Colonic mucosa (tissue), 4 donors: ENCODE measurements at regions of chr7 and their contacts with region 1.

Region 1: GRCh38 chr7:92944633-92945032 is 108.3 kb upstream of the CDK6 start:
- DNase-seq: peak; percentile 60
- H3K4me3 ChIP-seq: no peak overlapping the region
- H3K27ac ChIP-seq: no peak overlapping the region
- H3K4me1 ChIP-seq: no peaks in the 10 kb centered on the region
- H3K27me3 ChIP-seq: no peaks in the 10 kb centered on the region
- CTCF ChIP-seq: no peak

Region 2: DNA sequence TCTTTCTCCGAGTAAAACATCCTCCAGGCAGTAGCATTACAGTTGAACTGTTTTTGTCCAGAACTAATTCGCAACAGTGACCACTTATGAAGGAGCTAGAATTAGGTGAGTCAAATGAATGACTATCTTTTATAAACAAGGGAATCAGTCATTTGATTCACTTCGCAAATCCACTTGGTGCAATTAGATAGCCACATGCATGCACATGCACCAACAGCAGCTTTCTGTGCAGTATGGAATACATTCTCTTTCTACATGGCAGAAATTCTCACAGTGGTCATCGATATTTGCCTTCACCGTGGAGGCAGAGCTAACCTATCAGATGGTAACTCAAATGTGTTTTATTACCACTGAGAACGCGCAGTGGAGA is 227.0 kb before region 1 on chr7:
- intact Hi-C with region 1: no loop called
- DNase-seq: no peak
- H3K4me3 ChIP-seq: peak overlapping the region; percentile 36
- H3K27ac ChIP-seq: peak overlapping the region; percentile 74
- H3K4me1 ChIP-seq: peaks cover 4% of the 10 kb centered on the region
- H3K27me3 ChIP-seq: no peaks in the 10 kb centered on the region
- CTCF ChIP-seq: no peak

Region 3: DNA sequence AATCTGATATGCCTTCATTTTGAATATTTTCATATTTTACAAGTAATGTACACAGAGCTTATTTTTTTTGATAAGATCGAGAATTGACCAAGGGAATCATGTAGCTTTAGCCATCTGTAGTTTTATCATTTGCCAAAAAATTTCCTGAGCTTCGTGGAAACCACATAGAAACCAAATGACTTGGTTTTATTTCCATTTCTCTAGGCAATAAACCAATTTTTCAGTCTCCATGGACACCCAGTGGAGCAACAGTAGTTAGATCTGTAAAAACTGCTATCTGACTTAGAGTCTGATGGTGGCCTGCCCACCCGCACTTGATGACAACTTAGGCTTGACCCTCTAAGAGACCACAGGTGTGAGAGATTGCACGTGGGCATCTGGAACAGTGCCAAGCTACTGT is 19.5 kb after region 1 on chr7:
- intact Hi-C with region 1: no loop called
- DNase-seq: no peak
- H3K4me3 ChIP-seq: no peak overlapping the region
- H3K27ac ChIP-seq: no peak overlapping the region
- H3K4me1 ChIP-seq: no peaks in the 10 kb centered on the region
- H3K27me3 ChIP-seq: no peaks in the 10 kb centered on the region
- CTCF ChIP-seq: no peak

Region 4: GRCh38 chr7:93015779-93016481 is 71.3 kb after region 1 on chr7:
- intact Hi-C with region 1: loop called (anchors 10 kb)
- DNase-seq: peak; percentile 74
- H3K4me3 ChIP-seq: no peak overlapping the region
- H3K27ac ChIP-seq: peak overlapping the region; percentile 52
- H3K4me1 ChIP-seq: peaks cover 19% of the 10 kb centered on the region
- H3K27me3 ChIP-seq: no peaks in the 10 kb centered on the region
- CTCF ChIP-seq: no peak